ENCODE measurements at regions of chr10 and their contacts with region 1.

Region 1: DNA sequence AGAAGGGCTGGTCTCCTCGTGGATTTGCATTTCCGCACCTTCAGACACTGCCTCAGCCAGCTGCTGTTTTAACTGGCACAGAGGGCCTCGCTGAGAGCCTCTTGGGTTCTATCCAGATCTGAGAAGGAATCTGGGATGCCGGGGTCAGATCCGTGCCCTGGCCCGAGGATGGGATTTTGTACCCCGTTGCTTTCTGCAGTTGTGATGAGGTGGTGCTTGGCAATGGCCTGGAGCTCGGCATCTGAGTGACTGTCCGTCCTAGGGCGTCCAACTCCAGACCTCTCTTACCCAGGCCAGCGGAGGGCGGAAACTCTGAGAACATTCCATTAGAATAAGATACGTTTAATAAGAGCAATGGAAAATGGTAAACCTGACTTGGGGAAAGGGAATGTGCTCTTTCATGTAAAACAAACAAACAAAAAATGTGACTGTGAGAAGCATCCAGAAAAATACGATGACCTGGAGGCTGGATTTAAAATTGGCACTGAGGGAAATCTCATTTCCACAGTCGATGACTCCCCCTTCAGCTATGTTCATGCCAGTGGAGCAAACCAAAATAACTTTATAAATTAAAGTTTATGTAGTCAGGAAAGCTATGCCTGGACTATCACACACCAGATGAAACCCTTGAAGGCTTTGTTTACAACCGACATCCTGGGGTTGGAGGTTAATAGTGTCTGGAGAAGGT is 39.6 kb downstream of the GRK5 start:
- DNase-seq: no peak
- H3K4me3 Mint-ChIP-seq: no peak overlapping the region
- H3K27ac Mint-ChIP-seq: no peak overlapping the region
- H3K4me1 Mint-ChIP-seq: peaks cover 18% of the 10 kb centered on the region
- H3K27me3 Mint-ChIP-seq: no peaks in the 10 kb centered on the region

Region 2: GRCh38 chr10:118873738-118874105 is 373.3 kb before region 1 on chr10:
- CTCF ChIA-PET with region 1: no interaction called
- POLR2A ChIA-PET with region 1: no interaction called
- DNase-seq: no peak
- H3K4me3 Mint-ChIP-seq: no peak overlapping the region
- H3K27ac Mint-ChIP-seq: no peak overlapping the region
- H3K4me1 Mint-ChIP-seq: no peaks in the 10 kb centered on the region
- H3K27me3 Mint-ChIP-seq: peaks cover 17% of the 10 kb centered on the region

Region 3: GRCh38 chr10:119149723-119150122 is 97.3 kb before region 1 on chr10:
- CTCF ChIA-PET with region 1: no interaction called
- POLR2A ChIA-PET with region 1: no interaction called
- DNase-seq: no peak
- H3K4me3 Mint-ChIP-seq: no peak overlapping the region
- H3K27ac Mint-ChIP-seq: peak overlapping the region; percentile 75
- H3K4me1 Mint-ChIP-seq: no peaks in the 10 kb centered on the region
- H3K27me3 Mint-ChIP-seq: no peaks in the 10 kb centered on the region

Region 4: GRCh38 chr10:119217991-119218490 is 29.0 kb before region 1 on chr10:
- CTCF ChIA-PET with region 1: no interaction called
- POLR2A ChIA-PET with region 1: no interaction called
- DNase-seq: no peak
- H3K4me3 Mint-ChIP-seq: no peak overlapping the region
- H3K27ac Mint-ChIP-seq: no peak overlapping the region
- H3K4me1 Mint-ChIP-seq: peaks cover 32% of the 10 kb centered on the region
- H3K27me3 Mint-ChIP-seq: no peaks in the 10 kb centered on the region

Region 5: GRCh38 chr10:119257899-119258419 is 11.0 kb after region 1 on chr10:
- CTCF ChIA-PET with region 1: interaction called, 10 read pairs
- POLR2A ChIA-PET with region 1: interaction called, 4 read pairs
- DNase-seq: no peak
- H3K4me3 Mint-ChIP-seq: no peak overlapping the region
- H3K27ac Mint-ChIP-seq: no peak overlapping the region
- H3K4me1 Mint-ChIP-seq: peaks cover 13% of the 10 kb centered on the region
- H3K27me3 Mint-ChIP-seq: no peaks in the 10 kb centered on the region